ENCODE measurements at regions of chr1 and their contacts with region 1.

Region 1: DNA sequence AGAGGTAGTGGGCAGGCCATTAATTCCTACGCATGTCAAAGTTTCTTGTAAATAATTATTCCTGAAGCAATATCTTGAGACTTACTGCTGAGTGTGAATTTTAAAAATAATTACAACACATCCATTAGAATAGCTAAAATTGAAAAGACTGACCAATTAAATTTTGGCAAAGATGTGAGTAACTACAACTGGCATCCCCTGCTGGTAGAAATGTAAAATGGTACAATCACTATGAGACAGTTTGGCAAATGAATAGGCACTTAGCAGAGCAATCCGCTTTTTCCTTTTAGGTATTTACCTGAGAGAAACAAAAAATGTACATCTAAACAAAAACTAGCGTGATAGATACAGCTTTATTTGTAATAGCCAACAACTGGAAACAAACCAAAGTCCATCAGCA is 798.9 kb downstream of the BRINP3 start:
- DNase-seq: no peak
- H3K4me3 ChIP-seq: no peak overlapping the region
- H3K4me3 Mint-ChIP-seq: no peak overlapping the region
- H3K27ac Mint-ChIP-seq: no peak overlapping the region
- H3K4me1 ChIP-seq: no peaks in the 10 kb centered on the region
- H3K4me1 Mint-ChIP-seq: peaks cover 7% of the 10 kb centered on the region
- H3K27me3 ChIP-seq: no peaks in the 10 kb centered on the region
- H3K27me3 Mint-ChIP-seq: no peaks in the 10 kb centered on the region
- CTCF ChIP-seq: peak; percentile 30 to 42

Region 2: DNA sequence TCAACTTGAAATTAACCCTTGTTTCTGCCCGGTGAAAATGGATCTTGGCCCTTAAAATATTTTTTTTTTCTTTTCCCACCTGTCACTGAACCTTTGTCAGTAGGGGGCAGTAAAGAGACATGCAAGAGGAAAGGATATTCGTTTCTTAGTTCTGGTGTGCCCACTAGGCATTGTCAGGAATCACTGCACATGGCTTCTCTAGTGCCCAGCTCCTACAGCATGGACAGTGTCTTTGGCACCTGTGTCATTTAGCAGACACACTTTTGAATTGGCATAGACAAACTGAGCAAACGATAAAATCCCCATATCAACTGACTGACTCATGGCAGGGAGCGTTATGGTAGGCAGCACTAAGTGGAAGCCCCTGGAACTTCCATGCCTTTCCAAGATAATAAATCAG is 249.2 kb before region 1 on chr1:
- CTCF ChIA-PET with region 1: no interaction called
- POLR2A ChIA-PET with region 1: no interaction called
- intact Hi-C with region 1: loop called (anchors 1 kb)
- DNase-seq: peak in 1 of 2 experiments; percentile 56
- H3K4me3 ChIP-seq: no peak overlapping the region
- H3K4me3 Mint-ChIP-seq: no peak overlapping the region
- H3K27ac Mint-ChIP-seq: no peak overlapping the region
- H3K4me1 ChIP-seq: no peaks in the 10 kb centered on the region
- H3K4me1 Mint-ChIP-seq: no peaks in the 10 kb centered on the region
- H3K27me3 ChIP-seq: no peaks in the 10 kb centered on the region
- H3K27me3 Mint-ChIP-seq: peaks cover under 1% of the 10 kb centered on the region
- CTCF ChIP-seq: peak; percentile 62

Region 3: GRCh38 chr1:189619682-189620332 is 59.0 kb before region 1 on chr1:
- CTCF ChIA-PET with region 1: no interaction called
- POLR2A ChIA-PET with region 1: no interaction called
- intact Hi-C with region 1: loop called (anchors 1 kb)
- DNase-seq: no peak
- H3K4me3 ChIP-seq: no peak overlapping the region
- H3K4me3 Mint-ChIP-seq: no peak overlapping the region
- H3K27ac Mint-ChIP-seq: no peak overlapping the region
- H3K4me1 ChIP-seq: no peaks in the 10 kb centered on the region
- H3K4me1 Mint-ChIP-seq: no peaks in the 10 kb centered on the region
- H3K27me3 ChIP-seq: no peaks in the 10 kb centered on the region
- H3K27me3 Mint-ChIP-seq: no peaks in the 10 kb centered on the region
- CTCF ChIP-seq: no peak

Region 4: DNA sequence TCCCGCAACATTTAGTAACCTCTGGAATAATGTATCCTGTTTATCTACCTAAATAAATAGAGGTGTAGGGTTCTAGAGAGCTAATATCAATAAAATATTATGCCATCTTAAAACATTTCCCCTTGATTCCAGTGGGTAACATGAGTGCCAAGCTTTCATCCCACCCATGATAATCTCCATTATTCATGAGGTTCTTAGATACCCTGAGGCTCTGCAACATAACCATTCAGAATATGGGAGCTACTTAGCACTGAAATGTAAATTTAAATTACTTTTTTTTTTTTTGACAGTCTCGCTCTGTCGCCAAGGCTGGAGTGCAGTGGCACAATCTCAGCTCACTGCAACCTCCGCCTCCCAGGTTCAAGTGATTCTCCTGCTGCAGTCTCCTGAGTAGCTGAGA is 33.8 kb before region 1 on chr1:
- CTCF ChIA-PET with region 1: no interaction called
- POLR2A ChIA-PET with region 1: no interaction called
- intact Hi-C with region 1: loop called (anchors 2 kb)
- DNase-seq: no peak
- H3K4me3 ChIP-seq: no peak overlapping the region
- H3K4me3 Mint-ChIP-seq: no peak overlapping the region
- H3K27ac Mint-ChIP-seq: no peak overlapping the region
- H3K4me1 ChIP-seq: peaks cover 40% of the 10 kb centered on the region
- H3K4me1 Mint-ChIP-seq: peaks cover 11% of the 10 kb centered on the region
- H3K27me3 ChIP-seq: no peaks in the 10 kb centered on the region
- H3K27me3 Mint-ChIP-seq: no peaks in the 10 kb centered on the region
- CTCF ChIP-seq: no peak